SK-N-SH (cell line): ENCODE measurements at regions of chr11 and their contacts with region 1.

Region 1: DNA sequence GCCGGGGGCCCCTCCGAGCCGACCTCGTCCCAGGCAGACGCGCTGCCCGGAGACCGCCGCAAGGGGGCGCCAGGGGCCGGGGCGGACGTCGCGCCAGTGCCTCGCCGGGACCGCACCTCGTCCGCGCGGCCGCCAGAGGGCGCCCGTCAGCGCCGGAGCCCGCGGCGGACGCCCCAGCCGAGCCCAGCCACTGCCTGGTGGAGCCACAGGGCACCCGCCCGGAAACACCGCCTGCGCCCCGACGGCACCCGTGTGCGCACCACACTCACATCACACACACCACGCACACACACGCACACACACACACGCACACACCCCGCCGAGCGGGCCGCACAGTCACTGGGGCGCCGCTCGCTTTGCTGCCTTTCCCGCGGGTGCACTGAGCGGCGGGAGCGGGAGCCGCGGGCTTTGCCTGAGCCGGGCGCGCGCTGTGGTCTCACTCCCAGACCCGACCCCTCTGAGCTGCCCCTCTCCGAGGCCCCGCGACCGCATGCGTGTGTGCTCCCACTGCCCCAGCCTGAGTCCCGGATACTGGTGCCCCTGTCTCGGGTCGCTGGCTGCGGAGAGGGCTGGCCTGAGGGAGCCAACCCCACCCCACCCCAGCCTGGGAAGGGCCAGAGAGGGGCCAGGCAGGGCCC is 449.3 kb downstream of the OPCML start:
- DNase-seq: peak; percentile 95
- H3K4me3 ChIP-seq: peak overlapping the region; percentile 21 to 44; a peak in 3 of 4 replicates
- H3K27ac ChIP-seq: no peak overlapping the region
- H3K4me1 ChIP-seq: no peaks in the 10 kb centered on the region; a peak in 1 of 4 replicates
- H3K27me3 ChIP-seq: no peaks in the 10 kb centered on the region
- CTCF ChIP-seq: peak; percentile 48
- EP300 ChIP-seq: no peak
- RAD21 ChIP-seq: peak; percentile 54

Region 2: GRCh38 chr11:132655187-132655855 is 427.6 kb before region 1 on chr11:
- CTCF ChIA-PET with region 1: no interaction called
- POLR2A ChIA-PET with region 1: no interaction called
- DNase-seq: no peak
- H3K4me3 ChIP-seq: no peak overlapping the region
- H3K27ac ChIP-seq: no peak overlapping the region
- H3K4me1 ChIP-seq: no peaks in the 10 kb centered on the region
- H3K27me3 ChIP-seq: no peaks in the 10 kb centered on the region
- CTCF ChIP-seq: no peak
- EP300 ChIP-seq: no peak
- RAD21 ChIP-seq: no peak

Region 3: DNA sequence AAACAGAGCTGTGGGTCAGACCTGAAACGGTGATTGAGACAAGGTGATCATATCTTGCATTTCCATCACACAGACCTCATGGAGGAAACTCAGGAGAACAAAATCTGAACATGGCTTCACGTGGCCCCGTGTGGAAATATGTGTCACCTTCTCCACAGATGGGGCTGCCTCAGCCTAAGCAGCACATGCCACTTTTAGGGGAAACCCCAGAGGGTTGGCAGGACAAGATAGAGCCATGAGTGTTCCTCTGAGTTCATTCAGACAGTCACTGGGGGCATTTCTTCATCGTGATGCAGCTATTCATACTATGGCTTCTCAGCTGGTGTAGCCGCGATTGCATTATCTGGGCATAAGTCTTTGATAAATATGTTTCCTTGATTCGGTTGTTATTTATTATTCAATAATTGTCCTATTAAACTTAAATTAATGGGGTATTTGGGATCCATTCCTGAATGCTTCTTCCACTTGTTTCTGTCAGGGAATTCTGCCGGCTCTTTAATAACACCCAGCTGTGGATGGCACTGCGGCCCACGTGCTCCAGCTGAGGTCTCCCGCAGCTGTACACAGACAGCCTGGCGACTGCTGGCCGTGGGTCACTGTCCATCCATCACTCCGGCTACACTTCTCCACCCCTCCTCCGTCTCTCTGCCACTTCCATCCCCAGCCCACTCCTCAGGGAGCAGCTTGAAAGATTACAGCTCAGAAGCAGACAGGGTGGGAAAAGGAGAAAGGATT is 35.8 kb before region 1 on chr11:
- CTCF ChIA-PET with region 1: interaction called, 33 read pairs
- POLR2A ChIA-PET with region 1: no interaction called
- DNase-seq: peak; percentile 30
- H3K4me3 ChIP-seq: no peak overlapping the region
- H3K27ac ChIP-seq: no peak overlapping the region
- H3K4me1 ChIP-seq: peaks cover 0 to 5% of the 10 kb centered on the region in 2 experiments; a peak in 1 of 4 replicates
- H3K27me3 ChIP-seq: no peaks in the 10 kb centered on the region
- CTCF ChIP-seq: no peak
- EP300 ChIP-seq: no peak
- RAD21 ChIP-seq: no peak

Region 4: DNA sequence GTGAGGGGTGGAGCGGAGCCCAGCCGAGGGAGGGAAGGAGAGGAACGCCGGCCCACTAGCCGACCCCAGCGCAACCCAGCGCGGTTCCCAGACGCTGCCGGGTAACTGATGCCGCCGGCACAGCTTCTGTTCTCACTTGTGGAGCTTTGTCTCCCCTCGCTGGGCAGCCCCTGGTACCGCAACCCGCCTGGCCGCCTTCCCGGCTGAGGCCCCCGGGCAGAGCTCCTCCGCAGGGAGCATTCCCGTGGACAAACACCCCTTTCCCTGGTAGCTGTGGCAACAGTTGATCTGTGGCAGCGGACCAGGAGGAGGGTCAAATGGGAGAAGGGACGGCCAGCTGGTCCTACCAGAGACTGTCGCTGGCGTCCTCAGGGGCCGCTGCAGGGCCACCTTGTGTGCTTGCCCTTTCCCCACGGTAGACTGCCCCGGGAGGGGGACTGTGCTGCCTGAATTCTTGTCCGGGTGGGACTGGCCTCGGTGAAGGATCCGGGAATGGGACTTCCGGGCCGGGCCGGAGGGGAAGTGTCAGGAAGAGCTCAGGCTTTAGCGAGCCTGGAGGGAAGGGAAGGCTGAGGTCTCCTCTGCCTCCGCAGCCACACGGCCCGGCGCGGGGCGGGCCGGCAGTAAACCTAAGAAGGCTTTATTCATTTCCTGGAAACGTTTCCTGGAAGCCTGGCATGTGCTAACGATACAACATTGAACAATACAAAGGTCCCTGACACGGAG is 18.7 kb before region 1 on chr11:
- CTCF ChIA-PET with region 1: interaction called, 45 read pairs
- POLR2A ChIA-PET with region 1: no interaction called
- DNase-seq: peak; percentile 91
- H3K4me3 ChIP-seq: peak overlapping the region; percentile 19 to 44; a peak in 2 of 4 replicates
- H3K27ac ChIP-seq: no peak overlapping the region
- H3K4me1 ChIP-seq: peaks cover 0 to 3% of the 10 kb centered on the region in 2 experiments; a peak in 1 of 4 replicates
- H3K27me3 ChIP-seq: no peaks in the 10 kb centered on the region
- CTCF ChIP-seq: peak; percentile 32
- EP300 ChIP-seq: no peak
- RAD21 ChIP-seq: peak; percentile 84

Region 5: GRCh38 chr11:133163463-133164419 is 80.8 kb after region 1 on chr11:
- CTCF ChIA-PET with region 1: interaction called, 51 read pairs
- POLR2A ChIA-PET with region 1: no interaction called
- DNase-seq: peak; percentile 55
- H3K4me3 ChIP-seq: no peak overlapping the region
- H3K27ac ChIP-seq: no peak overlapping the region
- H3K4me1 ChIP-seq: no peaks in the 10 kb centered on the region
- H3K27me3 ChIP-seq: no peaks in the 10 kb centered on the region
- CTCF ChIP-seq: peak; percentile 38; the same call in 1 of the 2 replicates
- EP300 ChIP-seq: no peak
- RAD21 ChIP-seq: peak; percentile 65

Region 6: GRCh38 chr11:133834682-133835592 is 752.0 kb after region 1 on chr11:
- CTCF ChIA-PET with region 1: interaction called, 114 read pairs
- POLR2A ChIA-PET with region 1: no interaction called
- DNase-seq: peak; percentile 79
- H3K4me3 ChIP-seq: no peak overlapping the region; a peak in 1 of 4 replicates
- H3K27ac ChIP-seq: no peak overlapping the region
- H3K4me1 ChIP-seq: no peaks in the 10 kb centered on the region
- H3K27me3 ChIP-seq: no peaks in the 10 kb centered on the region
- CTCF ChIP-seq: peak; percentile 34; the same call in 1 of the 2 replicates
- EP300 ChIP-seq: no peak
- RAD21 ChIP-seq: peak; percentile 89